Activated CD8-positive, alpha-beta T cell treated with anti-CD3 and anti-CD28 coated beads for 36 hours (primary cell): ENCODE measurements at regions of chr7 and their contacts with region 1.

Region 1: GRCh38 chr7:44858161-44858560 is 10.3 kb upstream of the H2AZ2 start:
- DNase-seq: no peak
- ATAC-seq: no peak
- H3K4me3 Mint-ChIP-seq: no peak overlapping the region
- H3K27ac Mint-ChIP-seq: no peak overlapping the region
- H3K4me1 Mint-ChIP-seq: peaks cover 21% of the 10 kb centered on the region
- H3K27me3 Mint-ChIP-seq: peaks cover 3% of the 10 kb centered on the region
- CTCF ChIP-seq: peak; percentile 57

Region 2: GRCh38 chr7:44490351-44491200 is 367.6 kb before region 1 on chr7 and contains the start of gene NUDCD3:
- CTCF ChIA-PET with region 1: no interaction called
- POLR2A ChIA-PET with region 1: no interaction called
- intact Hi-C with region 1: no loop called
- DNase-seq: peak; percentile 86
- ATAC-seq: peak; percentile 78
- H3K4me3 Mint-ChIP-seq: peak within 1 kb of the TSS; percentile 92
- H3K27ac Mint-ChIP-seq: peak within 1 kb of the TSS; percentile 97
- H3K4me1 Mint-ChIP-seq: peaks cover 40% of the 10 kb centered on the region
- H3K27me3 Mint-ChIP-seq: peaks cover 2% of the 10 kb centered on the region
- CTCF ChIP-seq: no peak
- total RNA-seq, gene NUDCD3: 102 to 107 TPM

Region 3: GRCh38 chr7:44847508-44847920 is 10.6 kb before region 1 on chr7:
- CTCF ChIA-PET with region 1: interaction called, 40 read pairs
- POLR2A ChIA-PET with region 1: interaction called, 22 read pairs
- intact Hi-C with region 1: no loop called
- DNase-seq: peak; percentile 88
- ATAC-seq: peak; percentile 69
- H3K4me3 Mint-ChIP-seq: peak overlapping the region; percentile 92
- H3K27ac Mint-ChIP-seq: peak overlapping the region; percentile 100
- H3K4me1 Mint-ChIP-seq: peaks cover 36% of the 10 kb centered on the region
- H3K27me3 Mint-ChIP-seq: no peaks in the 10 kb centered on the region
- CTCF ChIP-seq: peak; percentile 85

Region 4: GRCh38 chr7:44885394-44886317 is 27.5 kb after region 1 on chr7 and contains the start of gene PURB:
- CTCF ChIA-PET with region 1: interaction called, 70 read pairs
- POLR2A ChIA-PET with region 1: interaction called, 11 read pairs
- intact Hi-C with region 1: no loop called
- DNase-seq: peak; percentile 97
- ATAC-seq: peak; percentile 94
- H3K4me3 Mint-ChIP-seq: peak within 1 kb of the TSS; percentile 96
- H3K27ac Mint-ChIP-seq: peak within 1 kb of the TSS; percentile 98
- H3K4me1 Mint-ChIP-seq: peaks cover 51% of the 10 kb centered on the region
- H3K27me3 Mint-ChIP-seq: no peaks in the 10 kb centered on the region
- CTCF ChIP-seq: no peak
- total RNA-seq, gene PURB: 20.5 to 21.0 TPM

Region 5: DNA sequence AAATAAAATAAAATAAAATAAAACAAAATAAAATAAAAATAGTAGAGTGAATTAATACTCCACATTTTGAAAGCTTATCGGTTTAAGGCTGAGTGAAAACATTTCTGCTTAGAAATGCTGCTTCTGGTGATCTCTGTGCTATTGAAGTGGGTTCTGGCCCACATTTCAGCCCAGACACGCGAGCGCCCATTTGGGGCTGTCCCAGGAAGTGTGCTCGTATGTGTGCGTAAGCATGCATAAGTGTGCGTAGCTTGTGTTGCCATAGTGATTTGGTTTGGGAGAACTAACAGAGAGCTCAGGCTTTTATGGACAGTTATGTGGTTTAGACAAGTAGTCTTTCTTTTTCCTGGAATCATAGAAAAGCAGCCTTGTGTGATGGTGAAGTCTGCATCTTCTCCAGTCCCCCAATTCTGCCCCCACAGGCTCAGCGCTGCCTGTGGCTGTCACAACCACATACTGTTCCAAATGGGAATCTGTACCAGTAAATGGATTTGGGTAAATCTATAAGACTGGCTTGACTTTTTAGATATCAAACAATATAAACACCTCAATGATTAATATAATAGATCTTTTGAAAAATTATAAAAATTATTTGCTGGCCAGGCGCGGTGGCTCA is 56.9 kb after region 1 on chr7:
- CTCF ChIA-PET with region 1: interaction called, 199 read pairs
- POLR2A ChIA-PET with region 1: interaction called, 6 read pairs
- intact Hi-C with region 1: no loop called
- DNase-seq: peak; percentile 89
- ATAC-seq: peak; percentile 96
- H3K4me3 Mint-ChIP-seq: no peak overlapping the region
- H3K27ac Mint-ChIP-seq: peak overlapping the region; percentile 75
- H3K4me1 Mint-ChIP-seq: peaks cover 25% of the 10 kb centered on the region
- H3K27me3 Mint-ChIP-seq: no peaks in the 10 kb centered on the region
- CTCF ChIP-seq: no peak

Region 6: GRCh38 chr7:44986218-44987053 is 128.3 kb after region 1 on chr7:
- CTCF ChIA-PET with region 1: interaction called, 6 read pairs
- POLR2A ChIA-PET with region 1: interaction called, 3 read pairs
- intact Hi-C with region 1: loop called (anchors 10 kb)
- DNase-seq: peak; percentile 97
- ATAC-seq: peak; percentile 91
- H3K4me3 Mint-ChIP-seq: peak overlapping the region; percentile 100
- H3K27ac Mint-ChIP-seq: peak overlapping the region; percentile 100
- H3K4me1 Mint-ChIP-seq: peaks cover 48% of the 10 kb centered on the region
- H3K27me3 Mint-ChIP-seq: no peaks in the 10 kb centered on the region
- CTCF ChIP-seq: no peak